Motor neuron (in vitro differentiated cells): ENCODE measurements at regions of chr15 and their contacts with region 1.

Region 1: GRCh38 chr15:71471347-71471746 is 339.0 kb upstream of the NR2E3 start:
- ATAC-seq: peak in 2 of 8 experiments; percentile 23 to 36
- H3K4me3 ChIP-seq: no peak overlapping the region
- H3K27ac ChIP-seq: no peak overlapping the region
- H3K4me1 ChIP-seq: no peaks in the 10 kb centered on the region

Region 2: GRCh38 chr15:71651750-71652186 is 180.4 kb after region 1 on chr15:
- in situ Hi-C with region 1: loop called in 2 of 9 experiments (anchors 25 kb)
- ATAC-seq: peak; percentile 48 to 98 (median 72)
- H3K4me3 ChIP-seq: no peak overlapping the region
- H3K27ac ChIP-seq: no peak overlapping the region
- H3K4me1 ChIP-seq: peaks cover 9 to 11% of the 10 kb centered on the region in 2 donors